ENCODE measurements at regions of chr12 and their contacts with region 1.

Region 1: DNA sequence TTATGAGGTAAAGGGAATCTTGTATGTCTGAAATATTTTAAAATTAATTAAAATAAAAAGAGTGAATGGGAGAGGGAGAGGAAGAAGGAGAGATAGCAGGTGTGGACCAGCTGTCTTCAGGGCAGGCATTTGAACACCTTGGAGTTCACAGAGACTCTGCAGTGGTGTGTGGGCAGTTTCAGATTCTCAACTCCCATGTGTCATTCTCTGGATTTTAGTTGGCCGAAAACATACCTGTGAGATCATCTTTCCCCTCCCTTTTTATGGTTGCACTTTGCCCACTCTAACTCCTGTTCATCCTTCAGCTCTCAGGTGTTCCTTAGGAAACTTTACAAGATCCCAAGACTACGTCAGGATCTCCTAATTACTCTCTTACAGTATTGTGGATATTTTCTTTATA is 108.1 kb downstream of the ERC1 start:
- DNase-seq: no peak
- ATAC-seq: no peak
- H3K4me3 ChIP-seq: no peak overlapping the region
- H3K27ac ChIP-seq: no peak overlapping the region
- H3K4me1 ChIP-seq: peaks cover 0 to 14% (median 0%) of the 10 kb centered on the region in 12 donors
- H3K27me3 ChIP-seq: no peaks in the 10 kb centered on the region
- CTCF ChIP-seq: no peak
- POLR2A ChIP-seq: no peak

Region 2: DNA sequence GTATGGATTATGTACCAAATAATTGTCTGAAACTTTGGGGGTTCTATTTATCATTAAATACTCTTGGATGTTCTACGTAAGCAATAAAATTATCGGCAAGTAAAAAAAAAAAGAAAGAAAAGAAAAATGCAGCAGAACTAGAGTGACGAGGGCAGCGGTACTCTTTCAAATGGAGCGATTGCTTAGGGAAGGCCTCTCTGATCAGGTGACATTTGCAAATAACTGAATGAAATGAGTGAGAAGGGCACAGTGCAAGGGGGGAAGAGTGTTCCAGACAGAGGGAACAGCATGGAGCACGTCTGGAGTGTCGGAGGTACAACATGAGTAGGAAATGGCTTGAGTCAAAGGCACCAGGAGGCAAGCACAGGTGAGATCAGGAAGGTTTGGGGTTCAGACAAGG is 135.4 kb before region 1 on chr12:
- intact Hi-C with region 1: loop called in 5 of 10 experiments (anchors 5 to 10 kb)
- DNase-seq: no peak
- ATAC-seq: no peak
- H3K4me3 ChIP-seq: no peak overlapping the region
- H3K27ac ChIP-seq: no peak overlapping the region
- H3K4me1 ChIP-seq: peaks cover 0 to 7% (median 0%) of the 10 kb centered on the region in 12 donors
- H3K27me3 ChIP-seq: no peaks in the 10 kb centered on the region
- CTCF ChIP-seq: no peak
- POLR2A ChIP-seq: no peak